Common myeloid progenitor, CD34-positive (primary cell): ENCODE measurements at regions of chr3 and their contacts with region 1.

Region 1: GRCh38 chr3:169390271-169391230 is 273.0 kb downstream of the MECOM start:
- DNase-seq: peak; percentile 39 to 60 (median 52)
- H3K4me3 ChIP-seq: no peak overlapping the region
- H3K27ac ChIP-seq: no peak overlapping the region
- H3K4me1 ChIP-seq: peaks cover 6 to 22% (median 12%) of the 10 kb centered on the region in 4 experiments
- H3K27me3 ChIP-seq: no peaks in the 10 kb centered on the region

Region 2: DNA sequence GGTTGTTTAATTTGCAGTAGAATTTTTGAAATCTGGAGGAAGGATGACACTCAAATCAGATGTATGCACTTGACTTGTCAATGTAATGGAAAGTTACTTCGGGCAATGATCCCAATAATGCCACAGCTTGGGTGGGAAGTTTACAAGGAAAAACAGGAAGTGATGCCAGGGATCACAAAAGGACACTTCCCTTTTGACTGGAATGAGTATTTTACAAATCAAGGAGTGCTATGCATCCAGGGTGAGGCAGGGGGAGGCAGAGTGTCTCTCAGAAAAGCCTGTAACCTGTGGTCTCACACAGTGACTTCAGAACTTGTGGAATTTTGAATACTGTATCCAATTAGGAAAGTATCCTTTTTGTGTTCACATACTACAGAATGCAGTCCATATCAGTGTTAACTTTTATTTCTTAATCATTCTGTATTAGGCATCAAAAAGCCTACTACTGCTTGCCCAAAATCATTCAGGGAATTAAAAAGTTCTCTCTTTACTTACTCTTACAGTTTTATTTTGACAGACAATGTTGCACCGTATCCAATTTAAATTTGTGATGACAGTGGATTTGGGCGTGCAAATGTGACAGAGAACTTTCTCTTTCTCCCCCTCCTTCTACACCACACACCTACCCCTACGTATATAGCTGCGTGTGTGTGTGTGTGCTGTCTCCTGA is 172.1 kb before region 1 on chr3:
- CTCF ChIA-PET with region 1: interaction called, 10 read pairs
- POLR2A ChIA-PET with region 1: no interaction called
- DNase-seq: peak; percentile 37 to 44 (median 37)
- H3K4me3 ChIP-seq: no peak overlapping the region
- H3K27ac ChIP-seq: no peak overlapping the region
- H3K4me1 ChIP-seq: peaks cover 0 to 10% (median 7%) of the 10 kb centered on the region in 4 experiments
- H3K27me3 ChIP-seq: no peaks in the 10 kb centered on the region

Region 3: GRCh38 chr3:169286214-169286613 is 104.3 kb before region 1 on chr3:
- CTCF ChIA-PET with region 1: no interaction called
- POLR2A ChIA-PET with region 1: no interaction called
- DNase-seq: no peak
- H3K4me3 ChIP-seq: no peak overlapping the region
- H3K27ac ChIP-seq: no peak overlapping the region
- H3K4me1 ChIP-seq: no peaks in the 10 kb centered on the region
- H3K27me3 ChIP-seq: no peaks in the 10 kb centered on the region

Region 4: GRCh38 chr3:169354774-169355501 is 35.6 kb before region 1 on chr3:
- CTCF ChIA-PET with region 1: interaction called, 12 read pairs
- POLR2A ChIA-PET with region 1: no interaction called
- DNase-seq: peak in 2 of 3 donors; percentile 34 to 52
- H3K4me3 ChIP-seq: peak overlapping the region in 5 of 7 experiments; percentile 25 to 68 (median 50)
- H3K27ac ChIP-seq: no peak overlapping the region
- H3K4me1 ChIP-seq: peaks cover 0 to 36% (median 7%) of the 10 kb centered on the region in 4 experiments
- H3K27me3 ChIP-seq: peaks cover 0 to 6% (median 0%) of the 10 kb centered on the region in 5 experiments

Region 5: GRCh38 chr3:169400874-169401273 is 10.3 kb after region 1 on chr3:
- CTCF ChIA-PET with region 1: interaction called, 15 read pairs
- POLR2A ChIA-PET with region 1: no interaction called
- DNase-seq: peak; percentile 26 to 61 (median 45)
- H3K4me3 ChIP-seq: no peak overlapping the region
- H3K27ac ChIP-seq: no peak overlapping the region
- H3K4me1 ChIP-seq: peaks cover 0 to 5% (median 0%) of the 10 kb centered on the region in 4 experiments
- H3K27me3 ChIP-seq: no peaks in the 10 kb centered on the region

Region 6: GRCh38 chr3:169454823-169455222 is 64.3 kb after region 1 on chr3:
- CTCF ChIA-PET with region 1: no interaction called
- POLR2A ChIA-PET with region 1: no interaction called
- DNase-seq: no peak
- H3K4me3 ChIP-seq: no peak overlapping the region
- H3K27ac ChIP-seq: no peak overlapping the region
- H3K4me1 ChIP-seq: peaks cover 0 to 4% (median 2%) of the 10 kb centered on the region in 4 experiments
- H3K27me3 ChIP-seq: no peaks in the 10 kb centered on the region

Region 7: DNA sequence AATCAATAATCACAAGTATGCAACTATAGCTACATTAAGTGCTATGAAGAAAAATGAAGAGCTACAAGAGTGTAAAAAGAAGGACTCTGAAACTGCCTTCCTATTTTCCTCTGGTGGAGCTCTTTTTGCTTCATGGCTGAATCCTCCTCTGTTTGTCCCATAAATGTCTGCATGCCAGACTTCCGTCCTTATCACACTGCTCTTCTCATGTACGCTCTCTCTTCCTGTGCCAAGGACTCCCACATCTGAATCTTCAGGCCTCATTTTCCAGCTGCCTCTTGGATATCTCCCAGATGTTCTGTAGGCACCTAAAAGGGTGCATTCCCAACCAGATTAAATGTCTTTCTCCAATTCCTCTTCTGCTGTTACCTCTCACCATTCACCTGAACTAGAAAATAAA is 149.3 kb after region 1 on chr3:
- CTCF ChIA-PET with region 1: no interaction called
- POLR2A ChIA-PET with region 1: no interaction called
- DNase-seq: no peak
- H3K4me3 ChIP-seq: no peak overlapping the region
- H3K27ac ChIP-seq: no peak overlapping the region
- H3K4me1 ChIP-seq: peaks cover 0 to under 1% (median 0%) of the 10 kb centered on the region in 4 experiments
- H3K27me3 ChIP-seq: no peaks in the 10 kb centered on the region